GM13976 (cell line): ENCODE measurements at regions of chr22 and their contacts with region 1.

Region 1: GRCh38 chr22:29394931-29395581 is 6.7 kb upstream of the AP1B1 start:
- DNase-seq: peak; percentile 83
- CTCF ChIP-seq: peak; percentile 86

Region 2: GRCh38 chr22:29470159-29470855 is 75.3 kb after region 1 on chr22:
- in situ Hi-C with region 1: loop called (anchors 10 kb)
- DNase-seq: peak; percentile 91
- CTCF ChIP-seq: peak; percentile 78

Region 3: DNA sequence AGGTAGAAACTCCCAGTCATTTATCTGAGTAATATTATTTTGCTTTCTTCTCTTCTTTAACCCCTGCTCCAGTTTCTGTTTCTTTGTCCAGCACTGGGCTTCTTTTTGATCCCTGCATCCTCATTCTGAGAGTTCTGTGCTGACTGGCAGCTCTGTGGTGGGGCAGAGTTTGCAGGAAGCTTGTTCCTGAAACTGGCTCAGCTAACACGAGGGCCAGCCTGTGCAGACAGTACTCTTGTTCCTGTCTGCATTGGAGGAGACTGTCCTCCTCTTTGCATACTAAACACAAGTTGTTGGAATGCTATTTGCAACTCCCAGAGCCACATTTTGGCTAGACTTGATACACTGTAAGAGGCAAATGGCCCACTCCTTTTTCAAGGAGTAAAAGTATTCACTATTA is 592.1 kb after region 1 on chr22:
- in situ Hi-C with region 1: no loop called
- DNase-seq: no peak
- CTCF ChIP-seq: no peak